Sciatic nerve (tissue), 2 donors: ENCODE measurements at regions of chr3 and their contacts with region 1.

Region 1: GRCh38 chr3:4493014-4493940 is at the start of gene ITPR1:
- DNase-seq: peak; percentile 99
- ATAC-seq: peak; percentile 99
- total RNA-seq, gene ITPR1: 81.3 TPM

Region 2: GRCh38 chr3:4561661-4562060 is 68.4 kb after region 1 on chr3:
- intact Hi-C with region 1: no loop called
- DNase-seq: no peak
- ATAC-seq: no peak

Region 3: DNA sequence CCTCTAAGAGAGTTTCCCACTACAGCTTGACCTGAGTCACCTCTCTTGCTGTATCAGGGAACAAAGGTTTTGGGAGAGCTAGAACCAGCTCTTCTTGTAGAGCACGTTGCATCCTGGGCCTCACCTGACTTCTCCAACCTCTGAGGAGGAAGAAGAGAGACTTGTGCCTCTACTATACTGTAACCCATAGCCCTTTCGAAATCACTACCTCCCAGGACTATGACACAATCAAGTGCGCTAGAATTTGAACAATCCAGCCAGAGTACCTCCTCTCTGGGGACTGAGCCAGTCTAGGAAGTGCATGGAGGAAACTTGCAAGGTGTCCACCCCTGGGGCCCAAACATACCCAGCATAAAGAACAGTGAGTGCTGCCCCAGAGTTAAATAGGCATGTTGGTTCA is 293.2 kb after region 1 on chr3:
- intact Hi-C with region 1: loop called (anchors 5 kb)
- DNase-seq: no peak
- ATAC-seq: no peak